ENCODE measurements at regions of chr1 and their contacts with region 1.

Region 1: DNA sequence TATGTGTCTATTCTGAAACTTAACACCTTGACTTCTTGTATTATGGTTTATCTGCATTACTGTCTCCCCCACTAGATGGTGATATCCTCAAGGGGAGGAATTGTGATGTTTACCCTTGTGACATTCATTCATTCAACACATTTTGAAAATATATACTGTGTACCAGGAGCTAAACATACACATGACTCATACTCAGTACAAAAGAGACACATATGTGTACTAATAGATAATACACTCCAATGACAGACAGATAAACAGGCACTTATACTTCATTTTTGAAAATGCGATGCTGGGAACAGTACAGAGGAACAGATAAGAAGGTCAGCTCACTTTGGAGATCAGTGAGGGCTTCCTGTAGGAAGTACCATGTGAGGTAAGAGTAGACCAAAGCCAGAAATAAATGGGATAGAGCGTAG is 8.9 kb upstream of the RAB3GAP2 start:
- DNase-seq: peak; percentile 24
- ATAC-seq: peak; percentile 83
- H3K4me3 ChIP-seq: no peak overlapping the region
- H3K27ac ChIP-seq: no peak overlapping the region
- H3K4me1 ChIP-seq: no peaks in the 10 kb centered on the region
- H3K27me3 ChIP-seq: no peaks in the 10 kb centered on the region
- CTCF ChIP-seq: peak; percentile 55 to 73 (median 65)
- POLR2A ChIP-seq: no peak
- RAD21 ChIP-seq: peak; percentile 87

Region 2: GRCh38 chr1:219876798-219877209 is 404.4 kb before region 1 on chr1:
- CTCF ChIA-PET with region 1: no interaction called
- POLR2A ChIA-PET with region 1: no interaction called
- RAD21 ChIA-PET with region 1: no interaction called
- intact Hi-C with region 1: loop called (anchors 10 kb)
- DNase-seq: peak; percentile 23
- ATAC-seq: peak; percentile 91
- H3K4me3 ChIP-seq: no peak overlapping the region
- H3K27ac ChIP-seq: no peak overlapping the region
- H3K4me1 ChIP-seq: no peaks in the 10 kb centered on the region
- H3K27me3 ChIP-seq: peaks cover 37% of the 10 kb centered on the region
- CTCF ChIP-seq: peak; percentile 57 to 60 (median 59); a peak in 5 of 6 replicates
- POLR2A ChIP-seq: no peak
- RAD21 ChIP-seq: peak; percentile 88

Region 3: GRCh38 chr1:220294846-220295301 is 13.7 kb after region 1 on chr1:
- CTCF ChIA-PET with region 1: interaction called, 23 read pairs
- POLR2A ChIA-PET with region 1: no interaction called
- RAD21 ChIA-PET with region 1: no interaction called
- intact Hi-C with region 1: no loop called
- DNase-seq: no peak
- ATAC-seq: no peak
- H3K4me3 ChIP-seq: no peak overlapping the region
- H3K27ac ChIP-seq: no peak overlapping the region
- H3K4me1 ChIP-seq: no peaks in the 10 kb centered on the region
- H3K27me3 ChIP-seq: no peaks in the 10 kb centered on the region
- CTCF ChIP-seq: no peak
- POLR2A ChIP-seq: no peak
- RAD21 ChIP-seq: no peak

Region 4: DNA sequence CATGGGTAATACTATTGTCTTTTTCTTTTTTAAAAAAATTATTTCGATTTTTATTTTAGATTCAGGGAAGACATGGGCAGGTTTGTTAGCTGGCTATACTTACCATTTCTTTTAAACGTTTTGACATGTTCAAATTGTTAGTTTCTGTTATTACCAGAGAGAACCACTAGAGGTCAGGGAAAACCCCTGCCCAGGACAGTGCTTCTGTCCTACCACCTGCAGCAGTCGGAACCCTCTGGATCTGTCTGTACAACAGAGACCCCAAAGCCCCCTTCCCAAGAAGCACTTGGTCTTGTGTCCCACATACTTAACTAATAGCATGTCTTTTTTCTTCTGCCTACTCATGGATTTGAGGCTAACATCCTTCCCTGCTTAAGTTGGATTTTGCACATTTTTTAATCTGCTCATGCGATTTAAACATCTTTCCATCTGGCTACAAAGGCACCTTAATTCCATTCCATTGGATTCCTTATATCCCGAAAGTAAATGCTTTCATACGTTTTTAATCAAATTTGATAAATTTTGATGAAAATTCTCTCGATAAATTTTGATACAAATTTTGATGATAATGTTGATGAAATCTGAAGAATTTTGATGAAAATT is 399.0 kb after region 1 on chr1:
- CTCF ChIA-PET with region 1: no interaction called
- POLR2A ChIA-PET with region 1: no interaction called
- RAD21 ChIA-PET with region 1: no interaction called
- intact Hi-C with region 1: loop called (anchors 5 kb)
- DNase-seq: peak; percentile 43
- ATAC-seq: peak; percentile 93
- H3K4me3 ChIP-seq: no peak overlapping the region
- H3K27ac ChIP-seq: no peak overlapping the region
- H3K4me1 ChIP-seq: no peaks in the 10 kb centered on the region
- H3K27me3 ChIP-seq: no peaks in the 10 kb centered on the region
- CTCF ChIP-seq: peak; percentile 63 to 75 (median 72)
- POLR2A ChIP-seq: no peak
- RAD21 ChIP-seq: peak; percentile 75

Region 5: GRCh38 chr1:220803401-220804201 is 522.4 kb after region 1 on chr1:
- CTCF ChIA-PET with region 1: interaction called, 10 read pairs
- POLR2A ChIA-PET with region 1: no interaction called
- RAD21 ChIA-PET with region 1: no interaction called
- intact Hi-C with region 1: loop called (anchors 1 kb)
- DNase-seq: no peak
- ATAC-seq: peak; percentile 89
- H3K4me3 ChIP-seq: no peak overlapping the region
- H3K27ac ChIP-seq: no peak overlapping the region
- H3K4me1 ChIP-seq: no peaks in the 10 kb centered on the region
- H3K27me3 ChIP-seq: no peaks in the 10 kb centered on the region
- CTCF ChIP-seq: peak; percentile 75 to 80 (median 80); a peak in 5 of 6 replicates
- POLR2A ChIP-seq: no peak
- RAD21 ChIP-seq: peak; percentile 72